Caco-2 (cell line): ENCODE measurements at regions of chr10 and their contacts with region 1.

Region 1: DNA sequence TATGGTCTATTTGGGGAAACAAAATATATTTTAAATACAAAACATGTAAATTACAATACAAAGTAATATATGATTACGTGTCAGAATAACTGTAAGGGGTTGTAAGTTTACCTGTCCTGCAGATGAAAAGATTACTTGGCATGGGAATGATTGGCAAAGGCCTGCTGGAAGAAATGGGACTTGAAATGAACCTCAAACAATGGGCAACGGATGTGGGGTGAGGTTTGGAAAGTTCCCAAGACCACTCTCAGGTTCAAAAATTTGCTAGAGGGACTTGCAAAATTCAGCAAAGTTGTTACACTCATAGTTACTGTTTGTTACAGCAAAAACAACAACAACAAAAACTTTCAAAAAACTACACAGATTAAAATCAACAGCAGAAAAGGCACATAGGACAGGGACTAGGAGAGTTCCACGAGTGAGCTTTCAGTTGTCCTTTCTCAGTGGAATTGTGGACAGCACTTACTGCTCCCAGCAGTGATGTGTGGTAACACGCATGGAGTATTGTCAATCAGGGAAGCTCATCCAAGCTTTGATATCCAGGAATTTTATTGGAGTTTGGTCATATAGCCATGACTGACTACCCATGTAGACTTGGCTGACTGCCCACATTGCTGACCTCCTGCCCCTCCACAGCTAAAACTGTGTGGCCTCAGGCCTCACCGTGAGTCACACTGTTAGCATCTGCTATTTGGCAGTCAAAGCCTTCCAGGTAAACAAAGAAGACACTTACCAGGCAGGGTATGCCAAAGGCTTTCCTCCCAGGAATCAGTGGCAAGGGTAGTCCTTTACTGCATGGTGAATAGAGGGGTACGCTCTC is 43.8 kb downstream of the EXOC6 start:
- DNase-seq: peak; percentile 75 to 94
- H3K4me3 ChIP-seq: no peak overlapping the region
- H3K4me3 Mint-ChIP-seq: peak overlapping the region; percentile 57
- H3K27ac Mint-ChIP-seq: peak overlapping the region; percentile 84
- H3K4me1 ChIP-seq: peaks cover 64% of the 10 kb centered on the region
- H3K4me1 Mint-ChIP-seq: peaks cover 10% of the 10 kb centered on the region
- H3K27me3 ChIP-seq: no peaks in the 10 kb centered on the region
- H3K27me3 Mint-ChIP-seq: no peaks in the 10 kb centered on the region
- CTCF ChIP-seq: no peak

Region 2: DNA sequence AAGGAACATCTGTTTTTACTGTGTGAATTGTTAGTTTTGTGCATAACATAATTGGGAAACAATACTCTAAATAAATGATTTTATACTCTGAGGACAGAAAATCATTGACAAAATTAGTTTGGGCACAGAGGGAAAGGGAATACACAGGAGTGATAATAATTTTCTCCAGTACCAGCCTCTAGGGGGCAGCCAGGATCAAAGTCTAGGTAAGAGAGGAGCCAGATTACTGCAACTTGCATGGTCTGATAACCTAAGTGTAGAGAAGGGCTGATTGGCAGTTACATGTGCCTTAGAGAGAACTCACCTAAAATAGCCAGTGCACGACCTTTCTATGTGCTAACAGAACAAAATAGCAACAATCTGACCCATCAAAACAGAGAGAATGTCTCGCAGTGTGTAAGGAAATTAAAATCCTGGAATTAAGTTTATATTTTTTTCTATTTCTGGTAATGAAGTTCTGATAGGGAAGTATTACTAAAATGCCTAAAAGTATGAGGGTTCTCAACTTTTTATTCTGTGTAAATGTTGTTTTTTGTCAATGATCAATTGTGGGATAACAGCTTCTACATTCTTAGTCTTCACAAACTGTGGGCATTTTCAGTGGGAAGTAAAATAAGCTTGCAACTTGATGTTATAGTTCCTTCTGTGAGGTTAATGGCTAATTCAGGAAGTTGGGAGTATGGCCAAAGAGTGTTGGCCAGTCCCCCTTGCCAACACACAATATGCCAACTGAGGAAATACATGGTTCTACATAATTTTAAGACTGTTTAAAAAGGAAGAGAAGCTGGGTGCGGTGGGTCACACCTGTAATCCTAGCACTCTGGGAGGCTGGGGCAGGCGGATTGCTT is 22.6 kb after region 1 on chr10:
- CTCF ChIA-PET with region 1: interaction called, 3 read pairs
- POLR2A ChIA-PET with region 1: interaction called, 3 read pairs
- intact Hi-C with region 1: loop called (anchors 2 kb)
- DNase-seq: peak; percentile 69 to 76
- H3K4me3 ChIP-seq: no peak overlapping the region
- H3K4me3 Mint-ChIP-seq: no peak overlapping the region
- H3K27ac Mint-ChIP-seq: no peak overlapping the region
- H3K4me1 ChIP-seq: no peaks in the 10 kb centered on the region; the same call in 1 of the 2 replicates
- H3K4me1 Mint-ChIP-seq: peaks cover 10% of the 10 kb centered on the region
- H3K27me3 ChIP-seq: no peaks in the 10 kb centered on the region
- H3K27me3 Mint-ChIP-seq: no peaks in the 10 kb centered on the region
- CTCF ChIP-seq: peak; percentile 79 to 85